ENCODE measurements at regions of chr4 and their contacts with region 1.

Region 1: GRCh38 chr4:181143250-181143854 is 1099.8 kb upstream of the TENM3 start:
- DNase-seq: peak; percentile 88
- H3K4me3 Mint-ChIP-seq: no peak overlapping the region
- H3K27ac Mint-ChIP-seq: no peak overlapping the region
- H3K4me1 Mint-ChIP-seq: no peaks in the 10 kb centered on the region
- H3K27me3 Mint-ChIP-seq: no peaks in the 10 kb centered on the region

Region 2: GRCh38 chr4:181528570-181529184 is 385.3 kb after region 1 on chr4:
- intact Hi-C with region 1: loop called (anchors 1 kb)
- DNase-seq: peak; percentile 73
- H3K4me3 Mint-ChIP-seq: no peak overlapping the region
- H3K27ac Mint-ChIP-seq: no peak overlapping the region
- H3K4me1 Mint-ChIP-seq: no peaks in the 10 kb centered on the region
- H3K27me3 Mint-ChIP-seq: no peaks in the 10 kb centered on the region

Region 3: GRCh38 chr4:182925298-182925738 is 1782.0 kb after region 1 on chr4:
- intact Hi-C with region 1: loop called (anchors 5 kb)
- DNase-seq: peak; percentile 84
- H3K4me3 Mint-ChIP-seq: no peak overlapping the region
- H3K27ac Mint-ChIP-seq: no peak overlapping the region
- H3K4me1 Mint-ChIP-seq: peaks cover 2% of the 10 kb centered on the region
- H3K27me3 Mint-ChIP-seq: peaks cover 27% of the 10 kb centered on the region

Measured in activated CD4-positive, alpha-beta T cell treated with anti-CD3 and anti-CD28 coated beads, Interleukin-2, amount 10 ng/mL, durations not matched to agents 24 days and 14 days (primary cell).